Mucosa of descending colon (tissue), 3 donors: ENCODE measurements at regions of chr12 and their contacts with region 1.

Region 1: DNA sequence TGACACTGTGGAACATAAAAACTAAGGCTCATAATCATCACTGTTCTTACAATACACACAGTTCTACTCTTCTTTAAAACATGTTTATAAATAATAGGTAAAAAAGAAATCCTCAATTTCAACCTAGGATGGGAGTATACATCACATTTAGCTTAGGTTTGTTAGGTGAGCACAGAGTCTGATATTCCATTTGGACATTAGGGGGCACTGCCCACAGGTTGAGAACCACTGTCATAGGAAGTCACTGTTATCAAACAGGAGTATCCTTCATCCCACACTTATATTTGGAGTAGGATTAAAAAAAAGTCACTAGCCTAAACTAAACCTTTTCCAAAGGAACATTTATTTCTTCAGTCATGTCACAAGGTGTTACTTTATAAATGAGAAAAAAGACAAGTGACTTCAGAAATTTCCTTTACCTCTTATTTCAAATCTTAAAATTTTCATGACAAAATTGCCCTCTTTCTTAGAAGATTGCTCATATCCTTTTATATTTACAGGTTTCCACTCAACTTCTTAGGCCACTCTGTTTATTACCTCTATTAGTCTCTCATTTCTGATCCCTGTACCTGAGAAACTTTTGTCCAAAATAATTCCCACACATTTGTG is 240.6 kb downstream of the CPNE8 start:
- DNase-seq: peak in 1 of 3 donors; percentile 62
- ATAC-seq: peak; percentile 74
- H3K4me3 ChIP-seq: no peak overlapping the region
- H3K4me1 ChIP-seq: no peaks in the 10 kb centered on the region
- CTCF ChIP-seq: peak; percentile 37

Region 2: DNA sequence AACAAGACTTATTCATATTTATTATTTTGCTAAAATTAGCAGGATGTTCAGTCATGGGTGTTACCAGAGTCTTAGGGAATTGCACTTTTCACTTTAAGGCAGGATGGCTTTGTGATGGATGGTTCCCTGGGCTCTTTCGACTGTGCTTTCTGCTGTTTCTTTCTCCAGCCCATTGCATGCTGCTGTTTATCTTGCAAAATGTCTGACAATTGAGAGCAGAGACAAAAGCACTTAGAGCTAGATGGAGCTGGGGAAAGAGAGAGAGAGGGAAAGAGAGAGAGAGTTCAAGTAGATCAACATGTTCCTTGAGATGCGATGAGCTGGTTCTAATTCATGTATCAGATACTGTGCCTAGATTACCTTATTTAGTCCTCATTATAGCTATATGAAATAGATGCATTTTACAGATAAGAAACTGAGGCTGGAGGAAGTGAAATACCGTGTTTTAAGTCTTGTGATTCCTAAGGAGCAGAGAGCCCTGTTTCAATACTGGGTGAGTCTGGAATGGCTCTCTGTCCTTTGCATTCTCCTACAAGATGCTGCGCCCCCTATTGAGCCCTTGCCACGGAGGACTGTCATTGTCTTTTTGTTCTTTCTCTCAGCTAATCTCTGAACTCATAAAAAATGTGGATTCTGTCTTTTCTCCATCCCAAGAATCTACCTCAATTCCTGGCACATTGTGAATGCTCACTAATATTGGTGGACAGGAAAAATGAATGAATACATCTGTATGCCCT is 120.3 kb before region 1 on chr12:
- intact Hi-C with region 1: no loop called
- DNase-seq: no peak
- ATAC-seq: no peak
- H3K4me3 ChIP-seq: no peak overlapping the region
- H3K4me1 ChIP-seq: no peaks in the 10 kb centered on the region
- CTCF ChIP-seq: no peak

Region 3: GRCh38 chr12:38601949-38602348 is 62.8 kb before region 1 on chr12:
- intact Hi-C with region 1: no loop called
- DNase-seq: no peak
- ATAC-seq: no peak
- H3K4me3 ChIP-seq: no peak overlapping the region
- H3K4me1 ChIP-seq: no peaks in the 10 kb centered on the region
- CTCF ChIP-seq: no peak

Region 4: GRCh38 chr12:38697290-38697689 is 32.5 kb after region 1 on chr12:
- intact Hi-C with region 1: no loop called
- DNase-seq: no peak
- ATAC-seq: no peak
- H3K4me3 ChIP-seq: no peak overlapping the region
- H3K4me1 ChIP-seq: no peaks in the 10 kb centered on the region
- CTCF ChIP-seq: no peak

Region 5: GRCh38 chr12:38707648-38708047 is 42.9 kb after region 1 on chr12:
- intact Hi-C with region 1: no loop called
- DNase-seq: no peak
- ATAC-seq: no peak
- H3K4me3 ChIP-seq: no peak overlapping the region
- H3K4me1 ChIP-seq: no peaks in the 10 kb centered on the region
- CTCF ChIP-seq: no peak

Region 6: GRCh38 chr12:38906482-38907170 is 241.9 kb after region 1 on chr12:
- intact Hi-C with region 1: loop called in 1 of 2 experiments (anchors 5 kb)
- DNase-seq: peak; percentile 91 to 94 (median 93)
- ATAC-seq: peak; percentile 82
- H3K4me3 ChIP-seq: peak overlapping the region; percentile 30
- H3K4me1 ChIP-seq: no peaks in the 10 kb centered on the region
- CTCF ChIP-seq: peak; percentile 84